Transverse colon (tissue), 4 donors: ENCODE measurements at regions of chr18 and their contacts with region 1.

Region 1: DNA sequence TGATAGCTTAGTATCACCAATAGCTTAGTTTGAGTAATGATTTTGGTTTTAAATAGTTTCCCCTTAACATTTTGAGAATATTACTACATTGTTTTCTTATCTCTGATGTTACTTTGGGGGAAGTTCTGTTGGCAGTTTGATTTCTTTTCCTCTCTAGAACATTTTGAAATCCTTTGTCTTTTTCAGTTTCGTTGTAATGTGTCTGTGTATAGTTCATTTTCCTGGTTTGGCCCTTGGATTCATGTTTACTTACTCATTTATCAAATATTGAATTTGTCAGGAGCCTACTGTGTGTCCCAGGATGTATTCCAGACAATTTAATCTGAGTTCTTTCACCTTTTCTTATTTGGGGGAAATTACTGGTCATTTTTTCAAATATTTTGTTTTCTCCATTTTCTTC is 16.7 kb downstream of the ANKRD12 start:
- DNase-seq: no peak
- H3K4me3 ChIP-seq: no peak overlapping the region
- H3K27ac ChIP-seq: peak overlapping the region in 1 of 4 donors; percentile 5
- H3K4me1 ChIP-seq: peaks cover 0 to 70% (median 14%) of the 10 kb centered on the region in 4 donors
- H3K27me3 ChIP-seq: no peaks in the 10 kb centered on the region
- CTCF ChIP-seq: no peak
- EP300 ChIP-seq: no peak
- POLR2A ChIP-seq: no peak

Region 2: GRCh38 chr18:9082711-9083510 is 70.3 kb before region 1 on chr18:
- in situ Hi-C with region 1: loop called in 1 of 4 experiments (anchors 10 kb)
- intact Hi-C with region 1: no loop called
- DNase-seq: no peak
- H3K4me3 ChIP-seq: no peak overlapping the region
- H3K27ac ChIP-seq: peak overlapping the region; percentile 8 to 52 (median 35)
- H3K4me1 ChIP-seq: no peaks in the 10 kb centered on the region
- H3K27me3 ChIP-seq: no peaks in the 10 kb centered on the region
- CTCF ChIP-seq: no peak
- EP300 ChIP-seq: no peak
- POLR2A ChIP-seq: no peak

Region 3: GRCh38 chr18:10131460-10132395 is 978.5 kb after region 1 on chr18:
- in situ Hi-C with region 1: no loop called
- intact Hi-C with region 1: no loop called
- DNase-seq: no peak
- H3K4me3 ChIP-seq: peak overlapping the region in 3 of 4 donors; percentile 1 to 35 (median 11)
- H3K27ac ChIP-seq: no peak overlapping the region
- H3K4me1 ChIP-seq: peaks cover 0 to 12% (median 4%) of the 10 kb centered on the region in 4 donors
- H3K27me3 ChIP-seq: peaks cover 14% of the 10 kb centered on the region
- CTCF ChIP-seq: no peak
- EP300 ChIP-seq: no peak
- POLR2A ChIP-seq: no peak